Lower leg skin (tissue), 4 donors: ENCODE measurements at regions of chr16 and their contacts with region 1.

Region 1: DNA sequence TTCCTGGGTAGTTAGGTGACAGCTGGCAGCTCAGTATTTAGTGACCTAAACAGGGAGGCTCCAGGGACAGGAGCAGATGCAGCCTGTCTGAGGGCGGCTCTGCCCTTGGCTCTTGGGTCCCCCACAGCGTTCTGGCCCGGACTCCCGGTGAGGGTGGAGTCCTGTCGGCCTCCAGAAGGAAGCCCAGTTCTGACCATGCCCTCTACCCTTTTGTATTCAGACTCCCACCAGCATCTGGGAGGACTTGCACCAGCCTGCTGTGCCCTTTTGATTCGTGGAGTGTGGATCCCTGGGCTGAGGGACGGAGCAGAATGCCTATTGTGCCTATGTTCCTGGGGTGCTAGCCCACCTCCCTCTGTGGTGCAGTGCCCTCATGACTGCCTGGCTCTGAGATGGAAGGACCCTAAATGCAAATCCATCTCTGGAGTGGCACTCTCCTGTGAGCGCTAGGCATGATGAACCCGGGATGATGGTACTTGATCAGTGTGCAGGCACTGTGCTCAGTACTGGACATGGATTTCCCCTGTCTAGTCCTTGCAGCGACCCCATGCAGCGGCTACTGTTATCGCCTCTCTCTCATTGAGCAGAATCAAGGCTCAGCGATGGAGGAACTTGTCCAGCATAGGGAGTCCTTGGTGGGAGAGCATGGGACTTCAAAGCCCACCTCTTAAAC is 123.1 kb downstream of the SNX29 start:
- DNase-seq: no peak
- H3K4me3 ChIP-seq: no peak overlapping the region
- CTCF ChIP-seq: no peak
- POLR2A ChIP-seq: no peak

Region 2: DNA sequence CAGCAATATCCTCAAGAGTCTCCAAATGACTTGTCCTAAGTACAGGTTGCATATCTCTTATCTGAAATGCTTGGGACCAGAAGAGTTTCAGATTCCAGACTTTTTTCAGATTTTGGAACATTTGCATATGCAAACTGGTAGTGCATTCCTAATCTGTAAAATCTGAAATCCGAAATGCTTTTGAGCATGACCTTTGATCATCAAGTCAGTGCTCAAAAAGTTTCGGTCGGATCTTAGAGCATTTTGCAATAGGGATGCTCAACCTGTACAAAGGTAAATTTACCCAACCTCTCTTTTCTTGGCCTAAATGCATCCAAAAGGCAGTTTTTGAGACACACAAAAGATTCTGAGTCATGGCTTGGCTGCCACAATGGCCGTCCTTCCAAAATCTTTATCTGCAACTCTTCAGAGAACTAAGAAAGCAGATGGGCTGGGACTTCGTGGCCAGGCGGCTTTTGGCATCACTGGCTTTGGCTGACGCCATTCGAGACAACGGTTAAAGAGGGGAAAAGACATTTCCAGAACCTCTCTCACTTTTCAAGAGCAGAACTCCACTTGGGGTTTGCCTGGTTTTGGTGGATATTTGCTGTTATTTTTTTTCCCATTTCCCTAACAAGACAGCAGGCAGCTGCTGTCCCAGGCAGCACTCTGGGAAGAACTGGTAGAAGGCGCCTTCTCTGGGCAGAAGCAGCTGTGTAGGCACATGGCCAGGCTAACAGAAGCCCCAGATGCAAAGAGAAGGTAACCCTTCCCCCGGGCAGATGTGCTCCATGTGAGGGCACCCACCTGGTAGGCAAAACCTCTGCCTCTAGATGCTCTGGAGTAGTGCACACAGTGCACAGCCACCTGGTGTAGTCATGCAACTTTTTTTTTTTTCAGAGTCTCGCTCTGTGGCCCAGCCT is 695.1 kb after region 1 on chr16:
- intact Hi-C with region 1: loop called (anchors 10 kb)
- DNase-seq: no peak
- H3K4me3 ChIP-seq: no peak overlapping the region
- CTCF ChIP-seq: no peak
- POLR2A ChIP-seq: no peak